ENCODE measurements at regions of chr1 and their contacts with region 1.

Region 1: DNA sequence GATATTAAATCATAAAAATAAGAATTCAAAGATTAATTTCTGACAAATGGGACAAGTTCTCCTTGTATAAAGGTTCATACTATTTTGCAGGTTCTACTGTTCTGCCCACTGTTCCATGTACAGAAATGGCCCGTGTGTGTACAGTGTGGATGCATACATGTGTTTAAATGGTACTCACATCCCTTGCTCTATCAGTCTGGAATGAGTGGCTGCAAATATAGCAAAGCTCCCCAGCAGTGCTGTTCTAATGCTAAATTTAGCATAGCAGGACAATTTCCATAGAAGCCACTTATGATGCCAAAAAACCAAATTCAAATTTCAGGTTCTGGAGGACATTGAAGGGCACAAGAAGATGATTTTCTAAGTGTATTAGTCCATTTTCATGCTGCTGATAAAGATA is 9.4 kb upstream of the SEC16B start:
- DNase-seq: no peak
- H3K4me3 ChIP-seq: no peak overlapping the region
- H3K27ac ChIP-seq: no peak overlapping the region
- H3K4me1 ChIP-seq: peaks cover 0 to 12% (median 0%) of the 10 kb centered on the region in 4 donors
- H3K27me3 ChIP-seq: no peaks in the 10 kb centered on the region
- CTCF ChIP-seq: no peak
- EP300 ChIP-seq: no peak
- POLR2A ChIP-seq: no peak

Region 2: DNA sequence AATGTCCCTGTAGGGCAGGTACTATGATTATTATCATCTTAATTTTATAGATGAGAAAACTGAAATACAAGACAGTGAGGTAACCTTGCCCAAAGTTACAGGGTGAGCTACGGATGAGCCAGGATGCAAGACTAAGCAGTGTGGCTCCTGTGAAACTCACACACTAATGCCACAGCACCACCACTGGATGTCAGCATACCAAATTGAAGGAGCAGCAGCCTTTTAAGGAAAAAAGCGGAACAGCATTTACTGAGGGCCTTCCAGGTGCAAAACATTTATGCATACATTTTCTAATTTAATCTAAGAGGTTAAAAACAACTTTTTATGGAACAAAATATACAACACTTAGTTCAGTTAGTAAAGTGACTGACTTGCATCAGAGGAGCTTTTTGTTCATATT is 51.1 kb before region 1 on chr1:
- in situ Hi-C with region 1: no loop called
- intact Hi-C with region 1: loop called (anchors 2 kb)
- DNase-seq: no peak
- H3K4me3 ChIP-seq: no peak overlapping the region
- H3K27ac ChIP-seq: no peak overlapping the region
- H3K4me1 ChIP-seq: no peaks in the 10 kb centered on the region
- H3K27me3 ChIP-seq: no peaks in the 10 kb centered on the region
- CTCF ChIP-seq: no peak
- EP300 ChIP-seq: no peak
- POLR2A ChIP-seq: no peak

Region 3: GRCh38 chr1:178023181-178023618 is 43.9 kb after region 1 on chr1:
- in situ Hi-C with region 1: no loop called
- intact Hi-C with region 1: no loop called
- DNase-seq: no peak
- H3K4me3 ChIP-seq: no peak overlapping the region
- H3K27ac ChIP-seq: peak overlapping the region in 3 of 4 donors; percentile 16 to 29 (median 23)
- H3K4me1 ChIP-seq: peaks cover 0 to 31% (median 13%) of the 10 kb centered on the region in 4 donors
- H3K27me3 ChIP-seq: no peaks in the 10 kb centered on the region
- CTCF ChIP-seq: no peak
- EP300 ChIP-seq: no peak
- POLR2A ChIP-seq: no peak